Activated B cell treated with CpG ODN at 0.5 μM for 24 hours (primary cell): ENCODE measurements at regions of chr2 and their contacts with region 1.

Region 1: GRCh38 chr2:203706403-203706802 is at the start of gene CD28:
- DNase-seq: peak; percentile 24
- ATAC-seq: peak; percentile 87
- H3K4me3 Mint-ChIP-seq: peak within 1 kb of the TSS; percentile 35
- H3K27ac Mint-ChIP-seq: peak within 1 kb of the TSS; percentile 27
- H3K4me1 Mint-ChIP-seq: peaks cover 12% of the 10 kb centered on the region
- H3K27me3 Mint-ChIP-seq: peaks cover 46% of the 10 kb centered on the region
- CTCF ChIP-seq: no peak
- total RNA-seq, gene CD28: 0.44 TPM in 1 of 2 replicates, not detected in the other

Region 2: GRCh38 chr2:203688798-203689197 is 17.6 kb before region 1 on chr2:
- CTCF ChIA-PET with region 1: no interaction called
- POLR2A ChIA-PET with region 1: no interaction called
- intact Hi-C with region 1: loop called (anchors 1 kb)
- DNase-seq: peak; percentile 18
- ATAC-seq: peak; percentile 80
- H3K4me3 Mint-ChIP-seq: peak overlapping the region; percentile 13
- H3K27ac Mint-ChIP-seq: no peak overlapping the region
- H3K4me1 Mint-ChIP-seq: peaks cover 22% of the 10 kb centered on the region
- H3K27me3 Mint-ChIP-seq: peaks cover 55% of the 10 kb centered on the region
- CTCF ChIP-seq: no peak

Region 3: DNA sequence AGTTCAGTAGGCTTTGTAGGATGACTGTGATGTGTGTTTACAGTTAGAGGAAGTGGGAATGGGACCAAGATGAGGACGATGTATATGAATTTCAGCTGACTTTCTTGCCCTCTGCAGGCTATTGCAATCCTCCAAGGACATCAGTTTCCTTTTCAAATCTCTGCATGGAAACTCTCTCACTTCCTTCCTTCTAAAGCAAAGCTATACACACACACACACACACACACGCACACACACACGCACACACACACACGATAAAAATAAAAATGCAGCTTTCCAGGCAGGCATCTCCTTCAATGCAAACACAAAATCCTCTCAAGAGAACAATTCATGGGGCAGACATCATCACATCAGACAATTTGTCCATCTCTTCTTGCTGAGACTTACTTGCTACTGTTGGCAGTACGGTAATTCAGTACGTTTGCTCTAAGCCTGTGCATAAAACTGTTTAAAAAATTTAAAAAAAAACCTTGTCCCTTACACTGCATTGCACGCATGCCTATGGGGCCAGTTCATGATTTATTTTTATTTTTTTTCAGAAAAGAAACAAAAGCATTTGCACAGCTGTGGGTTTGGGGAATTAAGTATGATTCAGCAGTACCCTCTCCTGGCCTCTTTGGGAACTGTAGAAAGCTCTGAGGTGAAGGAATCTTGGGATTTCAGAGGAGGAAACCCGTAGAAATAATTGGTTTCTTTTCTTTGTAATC is 203.0 kb after region 1 on chr2:
- CTCF ChIA-PET with region 1: no interaction called
- POLR2A ChIA-PET with region 1: no interaction called
- intact Hi-C with region 1: no loop called
- DNase-seq: no peak
- ATAC-seq: peak; percentile 28
- H3K4me3 Mint-ChIP-seq: no peak overlapping the region
- H3K27ac Mint-ChIP-seq: no peak overlapping the region
- H3K4me1 Mint-ChIP-seq: peaks cover 12% of the 10 kb centered on the region
- H3K27me3 Mint-ChIP-seq: peaks cover 12% of the 10 kb centered on the region
- CTCF ChIP-seq: no peak